ENCODE measurements at regions of chr2 and their contacts with region 1.

Region 1: DNA sequence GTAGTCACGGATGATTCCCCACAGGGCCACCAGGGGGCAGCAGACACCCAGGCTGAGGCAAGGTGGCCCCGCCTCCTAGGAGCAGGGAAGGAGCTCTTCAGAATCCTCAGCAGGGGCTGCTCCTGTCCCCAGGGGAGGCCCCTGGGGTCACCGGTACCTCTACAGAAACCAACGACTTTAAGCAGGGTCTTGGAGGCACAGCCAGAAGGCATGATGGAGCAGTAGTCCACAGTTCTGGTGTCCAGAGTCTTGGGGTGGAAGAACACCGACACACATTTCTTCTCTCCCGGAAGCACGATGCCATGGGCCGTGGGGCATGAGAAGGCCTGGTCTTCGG is 11.5 kb downstream of the CFAP65 start:
- DNase-seq: peak; percentile 93
- H3K4me3 ChIP-seq: peak overlapping the region in 1 of 2 experiments; percentile 49; a peak in 1 of 4 replicates
- H3K27ac ChIP-seq: no peak overlapping the region; a peak in 1 of 4 replicates
- H3K4me1 ChIP-seq: peaks cover 0 to 5% of the 10 kb centered on the region in 2 experiments; a peak in 1 of 4 replicates
- H3K27me3 ChIP-seq: peaks cover 18% of the 10 kb centered on the region; the same call in 1 of the 2 replicates
- CTCF ChIP-seq: peak; percentile 84
- EP300 ChIP-seq: no peak
- RAD21 ChIP-seq: peak; percentile 91

Region 2: GRCh38 chr2:218852911-218853667 is 176.7 kb before region 1 on chr2:
- CTCF ChIA-PET with region 1: interaction called, 12 read pairs
- POLR2A ChIA-PET with region 1: no interaction called
- DNase-seq: peak; percentile 74
- H3K4me3 ChIP-seq: no peak overlapping the region; a peak in 1 of 4 replicates
- H3K27ac ChIP-seq: no peak overlapping the region
- H3K4me1 ChIP-seq: peaks cover 3 to 43% of the 10 kb centered on the region in 2 experiments; a peak in 2 of 4 replicates
- H3K27me3 ChIP-seq: peaks cover 9% of the 10 kb centered on the region; the same call in 1 of the 2 replicates
- CTCF ChIP-seq: peak; percentile 81
- EP300 ChIP-seq: no peak
- RAD21 ChIP-seq: peak; percentile 95

Region 3: GRCh38 chr2:218995972-218996711 is 33.7 kb before region 1 on chr2:
- CTCF ChIA-PET with region 1: interaction called, 258 read pairs
- POLR2A ChIA-PET with region 1: interaction called, 5 read pairs
- DNase-seq: peak; percentile 96
- H3K4me3 ChIP-seq: peak overlapping the region; percentile 57 to 61
- H3K27ac ChIP-seq: peak overlapping the region in 1 of 2 experiments; percentile 99; a peak in 2 of 4 replicates
- H3K4me1 ChIP-seq: peaks cover 0 to 61% of the 10 kb centered on the region in 2 experiments; a peak in 2 of 4 replicates
- H3K27me3 ChIP-seq: no peaks in the 10 kb centered on the region
- CTCF ChIP-seq: peak; percentile 85
- EP300 ChIP-seq: 0 out of 4 replicates have a peak, but pooled peaks of 1 of the 2 experiments have one; percentile 24
- RAD21 ChIP-seq: peak; percentile 96

Region 4: GRCh38 chr2:219041252-219041651 is 11.5 kb after region 1 on chr2 and contains the start of gene CFAP65:
- CTCF ChIA-PET with region 1: interaction called, 64 read pairs
- POLR2A ChIA-PET with region 1: no interaction called
- DNase-seq: peak; percentile 84
- H3K4me3 ChIP-seq: peak within 1 kb of the TSS; percentile 74 to 78
- H3K27ac ChIP-seq: no peak within 1 kb of the TSS
- H3K4me1 ChIP-seq: peaks cover 4 to 6% of the 10 kb centered on the region in 2 experiments; a peak in 1 of 4 replicates
- H3K27me3 ChIP-seq: no peaks in the 10 kb centered on the region
- CTCF ChIP-seq: no peak
- EP300 ChIP-seq: 0 out of 4 replicates have a peak, but pooled peaks of 1 of the 2 experiments have one; percentile 19
- RAD21 ChIP-seq: no peak
- polyA plus RNA-seq, gene CFAP65: 0.95 and 1.7 TPM in 2 replicates

Region 5: GRCh38 chr2:219079417-219079816 is 49.6 kb after region 1 on chr2:
- CTCF ChIA-PET with region 1: interaction called, 31 read pairs
- POLR2A ChIA-PET with region 1: no interaction called
- DNase-seq: no peak
- H3K4me3 ChIP-seq: no peak overlapping the region
- H3K27ac ChIP-seq: no peak overlapping the region
- H3K4me1 ChIP-seq: no peaks in the 10 kb centered on the region
- H3K27me3 ChIP-seq: no peaks in the 10 kb centered on the region
- CTCF ChIP-seq: no peak
- EP300 ChIP-seq: no peak
- RAD21 ChIP-seq: no peak

Region 6: DNA sequence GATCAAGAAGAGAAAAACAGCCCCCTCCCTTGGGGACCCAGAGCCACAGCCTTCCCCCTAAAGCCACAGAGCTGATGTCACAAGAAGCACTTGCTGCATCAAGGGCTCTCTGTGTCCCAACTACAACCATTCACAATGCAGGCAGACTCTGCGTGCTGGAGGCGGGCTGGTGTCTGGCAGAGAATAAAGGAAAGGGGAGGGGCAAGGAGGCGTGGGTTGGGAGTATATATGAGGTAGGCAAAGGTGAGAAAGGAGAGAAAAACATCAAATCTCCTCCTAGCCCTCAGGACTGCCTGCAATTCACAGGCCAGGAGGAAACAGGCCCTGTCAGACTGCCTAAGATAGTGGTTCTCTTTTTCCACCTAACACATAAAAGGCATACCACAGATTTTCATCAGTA is 79.7 kb after region 1 on chr2:
- CTCF ChIA-PET with region 1: interaction called, 238 read pairs
- POLR2A ChIA-PET with region 1: no interaction called
- DNase-seq: no peak
- H3K4me3 ChIP-seq: no peak overlapping the region
- H3K27ac ChIP-seq: no peak overlapping the region
- H3K4me1 ChIP-seq: no peaks in the 10 kb centered on the region
- H3K27me3 ChIP-seq: no peaks in the 10 kb centered on the region
- CTCF ChIP-seq: no peak
- EP300 ChIP-seq: no peak
- RAD21 ChIP-seq: no peak

Region 7: DNA sequence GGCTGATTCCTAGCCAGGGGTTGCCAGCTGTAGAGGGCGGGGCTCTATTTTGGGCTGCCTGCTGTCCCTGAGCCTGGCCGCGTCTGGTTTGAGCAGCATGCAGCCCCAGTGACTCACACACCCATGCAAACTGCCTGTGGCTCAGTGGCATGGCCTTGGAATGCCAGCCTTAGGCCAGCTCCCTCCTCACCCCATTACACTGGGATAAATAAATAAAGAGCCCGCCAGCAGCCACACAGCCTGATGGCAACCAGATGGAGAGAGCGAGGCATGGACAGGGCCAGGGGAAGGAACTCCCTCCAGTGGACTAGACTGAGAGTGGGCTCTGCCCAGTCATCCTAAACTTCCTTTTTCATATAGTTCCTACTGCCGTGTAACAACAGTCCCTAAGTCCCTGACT is 112.5 kb after region 1 on chr2:
- CTCF ChIA-PET with region 1: interaction called, 75 read pairs
- POLR2A ChIA-PET with region 1: no interaction called
- DNase-seq: peak; percentile 48
- H3K4me3 ChIP-seq: no peak overlapping the region
- H3K27ac ChIP-seq: peak overlapping the region in 1 of 2 experiments; percentile 19; a peak in 2 of 4 replicates
- H3K4me1 ChIP-seq: peaks cover 8 to 10% of the 10 kb centered on the region in 2 experiments; a peak in 1 of 4 replicates
- H3K27me3 ChIP-seq: no peaks in the 10 kb centered on the region
- CTCF ChIP-seq: peak; percentile 38; the same call in 1 of the 2 replicates
- EP300 ChIP-seq: no peak
- RAD21 ChIP-seq: no peak